Left ventricle myocardium superior (tissue), 1 donor: ENCODE measurements at regions of chr2 and their contacts with region 1.

Region 1: DNA sequence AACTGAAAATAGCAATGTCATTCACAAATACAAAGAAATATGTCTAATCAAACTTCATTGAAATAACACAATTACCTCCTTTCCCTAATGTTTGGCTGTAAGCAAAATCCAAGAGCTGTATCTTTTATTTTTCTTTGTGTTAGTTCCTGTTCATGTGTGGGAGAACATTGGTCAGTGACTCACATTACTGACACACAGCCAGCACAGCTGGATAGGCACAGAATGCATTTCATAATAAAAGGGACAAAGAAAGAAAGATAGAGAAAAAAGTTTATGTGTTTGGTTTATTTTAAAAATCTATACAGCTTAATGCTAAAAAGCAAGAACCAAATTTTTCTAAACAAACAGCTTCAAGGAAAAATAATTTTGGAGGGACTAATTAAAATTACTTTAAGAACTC is 185.6 kb upstream of the COL3A1 start:
- DNase-seq: peak; percentile 46
- ATAC-seq: peak; percentile 75

Region 2: GRCh38 chr2:188645986-188646385 is 142.6 kb before region 1 on chr2:
- intact Hi-C with region 1: no loop called
- DNase-seq: no peak
- ATAC-seq: no peak

Region 3: GRCh38 chr2:188902901-188903491 is 114.4 kb after region 1 on chr2:
- intact Hi-C with region 1: no loop called
- DNase-seq: no peak
- ATAC-seq: no peak

Region 4: DNA sequence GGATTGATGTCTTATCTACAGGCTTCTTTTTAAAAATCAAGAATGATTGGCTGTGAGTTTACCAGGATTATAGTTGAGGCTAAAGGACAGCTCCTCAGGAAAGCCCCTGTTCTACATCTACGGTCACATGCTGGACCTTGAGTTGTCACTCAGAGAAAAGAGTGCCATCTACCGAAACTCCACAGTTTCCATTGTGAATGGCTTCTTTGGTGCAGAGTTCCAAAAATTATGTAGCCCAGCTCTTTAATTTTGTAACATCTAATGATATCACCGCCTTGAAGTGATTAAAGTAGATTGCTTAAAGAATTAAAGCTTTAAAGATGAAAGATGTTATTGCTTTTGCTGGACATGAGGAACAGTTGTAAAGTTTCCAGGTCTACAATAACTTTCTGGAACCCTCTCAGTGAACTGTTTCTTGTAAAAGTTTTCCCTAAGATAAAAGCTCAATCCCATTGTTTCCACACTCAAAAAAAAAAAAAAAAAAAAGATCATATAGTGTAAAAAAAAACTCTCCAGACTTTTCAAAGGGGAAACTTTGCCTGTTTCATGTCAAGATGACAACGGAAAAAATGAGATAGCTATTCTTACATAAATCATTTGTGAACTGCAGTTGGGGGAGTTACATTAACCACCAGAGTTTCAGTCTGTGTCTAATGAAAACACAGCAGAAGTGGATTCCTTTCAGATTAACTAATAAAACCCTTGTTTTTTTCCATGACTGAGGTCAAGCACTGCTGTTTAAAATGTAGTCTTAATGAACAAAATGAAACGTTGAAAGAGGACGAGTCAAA is 189.9 kb after region 1 on chr2:
- intact Hi-C with region 1: loop called (anchors 10 kb)
- DNase-seq: no peak
- ATAC-seq: peak; percentile 55